Activated B cell treated with CpG ODN at 0.5 μM for 24 hours (primary cell): ENCODE measurements at regions of chr2 and their contacts with region 1.

Region 1: DNA sequence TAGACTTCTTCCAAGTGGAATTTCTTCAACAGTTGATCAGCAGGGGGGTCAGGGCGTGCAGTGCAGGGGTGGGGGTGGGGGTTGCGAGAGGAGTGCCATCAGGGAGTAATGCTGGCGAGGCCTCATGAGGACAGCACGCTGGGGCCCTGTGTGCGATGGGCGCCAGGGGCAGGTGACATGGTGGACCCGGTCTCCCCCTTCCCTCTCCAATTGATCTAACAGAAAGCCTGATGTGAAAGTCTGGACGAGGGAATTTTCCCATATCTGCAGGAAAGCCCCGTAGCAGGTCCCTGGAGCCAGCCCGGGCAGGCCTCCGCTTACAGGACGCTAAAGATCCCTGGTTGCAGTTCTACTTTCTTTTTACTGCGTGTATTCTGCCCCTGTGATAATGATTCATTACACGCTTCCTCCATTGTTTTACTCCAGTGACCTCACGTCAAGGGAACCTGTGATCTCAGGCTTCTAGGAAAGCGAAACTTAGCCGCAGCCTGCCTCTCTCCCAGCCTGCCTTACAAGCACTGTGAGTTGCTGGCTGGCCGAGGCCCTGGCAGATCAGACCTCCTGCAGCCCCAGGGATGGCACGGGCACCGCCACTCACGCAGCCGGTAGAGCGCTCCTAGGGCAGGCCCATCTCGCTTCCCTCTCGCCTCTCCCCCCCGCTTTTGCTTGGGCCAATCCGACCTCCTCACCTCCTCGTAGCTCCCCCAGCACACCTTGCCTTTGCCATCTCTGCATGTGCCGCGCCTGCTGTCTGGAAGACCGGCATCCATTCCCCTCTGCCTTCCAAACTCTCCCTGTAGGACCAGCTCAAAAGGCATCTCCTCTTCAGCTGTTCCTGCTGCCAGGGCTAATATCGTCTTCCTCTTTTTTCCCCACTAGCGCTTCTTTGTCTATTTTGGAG is 19.2 kb downstream of the NEURL3 start:
- DNase-seq: peak; percentile 54
- ATAC-seq: peak; percentile 91
- H3K4me3 Mint-ChIP-seq: peak overlapping the region; percentile 91
- H3K27ac Mint-ChIP-seq: peak overlapping the region; percentile 96
- H3K4me1 Mint-ChIP-seq: peaks cover 24% of the 10 kb centered on the region
- H3K27me3 Mint-ChIP-seq: peaks cover 2% of the 10 kb centered on the region
- CTCF ChIP-seq: no peak

Region 2: GRCh38 chr2:96353032-96353561 is 132.9 kb before region 1 on chr2:
- CTCF ChIA-PET with region 1: no interaction called
- POLR2A ChIA-PET with region 1: no interaction called
- intact Hi-C with region 1: no loop called
- DNase-seq: no peak
- ATAC-seq: no peak
- H3K4me3 Mint-ChIP-seq: no peak overlapping the region
- H3K27ac Mint-ChIP-seq: no peak overlapping the region
- H3K4me1 Mint-ChIP-seq: no peaks in the 10 kb centered on the region
- H3K27me3 Mint-ChIP-seq: no peaks in the 10 kb centered on the region
- CTCF ChIP-seq: no peak

Region 3: GRCh38 chr2:96470636-96471035 is 15.4 kb before region 1 on chr2:
- CTCF ChIA-PET with region 1: no interaction called
- POLR2A ChIA-PET with region 1: no interaction called
- intact Hi-C with region 1: loop called (anchors 2 kb)
- DNase-seq: peak; percentile 52
- ATAC-seq: peak; percentile 76
- H3K4me3 Mint-ChIP-seq: no peak overlapping the region
- H3K27ac Mint-ChIP-seq: no peak overlapping the region
- H3K4me1 Mint-ChIP-seq: peaks cover 7% of the 10 kb centered on the region
- H3K27me3 Mint-ChIP-seq: peaks cover 7% of the 10 kb centered on the region
- CTCF ChIP-seq: peak; percentile 50

Region 4: DNA sequence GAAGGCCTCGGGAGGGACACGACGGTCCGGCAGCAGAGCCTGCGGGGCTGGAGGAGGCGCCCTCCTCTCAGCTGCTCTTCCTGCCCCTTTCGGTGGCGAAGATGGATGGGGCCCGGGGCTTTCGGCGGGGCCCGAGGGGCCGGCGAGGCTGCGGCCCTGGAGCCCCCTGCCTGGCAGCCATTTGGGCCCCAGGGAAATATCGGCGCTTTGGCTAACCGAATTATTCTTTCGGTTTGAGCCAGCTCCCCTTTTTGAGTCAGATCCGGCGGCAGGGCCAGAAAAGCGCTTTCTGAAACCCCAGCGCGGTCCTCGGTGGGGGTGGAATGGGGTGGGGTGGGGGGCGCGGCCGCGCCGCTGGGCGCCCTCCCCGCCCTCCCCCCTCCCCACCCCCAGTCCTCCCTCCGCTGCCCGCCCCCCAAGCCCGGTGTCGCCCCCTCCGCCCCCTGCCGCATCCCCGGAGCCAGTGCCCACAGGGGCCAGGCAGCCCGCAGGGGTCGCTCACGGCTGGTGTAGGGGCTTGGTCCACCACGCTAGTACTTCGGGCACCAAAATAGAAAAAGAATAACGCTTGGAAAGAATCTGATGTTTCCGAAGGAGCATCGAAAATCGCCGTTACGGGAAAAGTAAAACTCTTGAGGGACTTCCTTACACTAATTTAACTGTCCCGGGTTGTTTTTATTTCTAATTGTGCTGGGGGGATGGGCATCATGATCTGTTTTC is 41.4 kb after region 1 on chr2:
- CTCF ChIA-PET with region 1: no interaction called
- POLR2A ChIA-PET with region 1: interaction called, 4 read pairs
- intact Hi-C with region 1: loop called (anchors 1 kb)
- DNase-seq: peak; percentile 57
- ATAC-seq: peak; percentile 47
- H3K4me3 Mint-ChIP-seq: peak overlapping the region; percentile 83
- H3K27ac Mint-ChIP-seq: peak overlapping the region; percentile 83
- H3K4me1 Mint-ChIP-seq: peaks cover 56% of the 10 kb centered on the region
- H3K27me3 Mint-ChIP-seq: peaks cover 3% of the 10 kb centered on the region
- CTCF ChIP-seq: no peak